GM10248 (cell line): ENCODE measurements at regions of chr10 and their contacts with region 1.

Region 1: GRCh38 chr10:100216006-100216405 is 13.4 kb downstream of the CHUK start:
- DNase-seq: no peak
- CTCF ChIP-seq: no peak

Region 2: DNA sequence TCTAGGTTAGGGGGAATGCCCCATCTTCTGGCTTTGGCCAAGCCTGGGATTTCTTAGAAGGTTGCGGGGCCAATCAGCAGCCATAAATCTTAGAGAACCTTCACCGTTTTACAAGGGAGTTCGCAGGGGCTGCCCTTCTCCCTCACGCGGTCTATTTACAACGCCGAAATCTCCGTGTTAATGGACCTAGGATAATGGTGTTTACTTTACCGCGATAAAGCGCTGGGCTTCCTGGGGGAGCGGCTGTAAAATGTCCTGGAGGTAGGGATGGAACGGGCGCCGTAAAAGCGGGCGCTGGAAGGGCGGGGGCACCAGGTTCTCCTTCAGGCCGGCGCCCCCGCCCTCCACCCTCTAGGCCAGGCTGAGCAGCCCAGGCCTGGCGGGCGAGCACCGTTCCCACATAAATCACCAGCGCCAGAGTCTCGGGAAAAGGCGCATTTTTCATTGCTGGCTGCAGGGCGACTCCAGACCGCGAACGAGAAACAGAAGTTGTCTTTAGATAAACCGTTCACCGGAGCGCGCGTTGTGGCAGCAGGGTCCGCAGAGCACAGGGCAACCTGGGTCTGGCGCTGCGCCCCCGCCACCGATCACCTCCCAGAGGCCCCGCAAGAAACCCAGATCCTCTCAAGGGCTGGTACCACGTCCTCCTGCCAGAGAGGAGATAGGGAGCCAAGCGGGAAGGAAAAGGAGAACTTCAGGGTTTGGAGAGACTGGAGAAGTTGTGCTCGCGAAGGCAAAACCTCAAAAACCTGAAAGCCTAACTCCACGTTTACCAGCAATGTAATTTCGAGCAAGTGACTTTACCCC is 695.8 kb before region 1 on chr10:
- CTCF ChIA-PET with region 1: no interaction called
- POLR2A ChIA-PET with region 1: no interaction called
- DNase-seq: no peak
- CTCF ChIP-seq: no peak

Region 3: GRCh38 chr10:100229819-100230422 is 13.9 kb after region 1 on chr10:
- CTCF ChIA-PET with region 1: interaction called, 10 read pairs
- POLR2A ChIA-PET with region 1: no interaction called
- DNase-seq: no peak
- CTCF ChIP-seq: no peak

Region 4: DNA sequence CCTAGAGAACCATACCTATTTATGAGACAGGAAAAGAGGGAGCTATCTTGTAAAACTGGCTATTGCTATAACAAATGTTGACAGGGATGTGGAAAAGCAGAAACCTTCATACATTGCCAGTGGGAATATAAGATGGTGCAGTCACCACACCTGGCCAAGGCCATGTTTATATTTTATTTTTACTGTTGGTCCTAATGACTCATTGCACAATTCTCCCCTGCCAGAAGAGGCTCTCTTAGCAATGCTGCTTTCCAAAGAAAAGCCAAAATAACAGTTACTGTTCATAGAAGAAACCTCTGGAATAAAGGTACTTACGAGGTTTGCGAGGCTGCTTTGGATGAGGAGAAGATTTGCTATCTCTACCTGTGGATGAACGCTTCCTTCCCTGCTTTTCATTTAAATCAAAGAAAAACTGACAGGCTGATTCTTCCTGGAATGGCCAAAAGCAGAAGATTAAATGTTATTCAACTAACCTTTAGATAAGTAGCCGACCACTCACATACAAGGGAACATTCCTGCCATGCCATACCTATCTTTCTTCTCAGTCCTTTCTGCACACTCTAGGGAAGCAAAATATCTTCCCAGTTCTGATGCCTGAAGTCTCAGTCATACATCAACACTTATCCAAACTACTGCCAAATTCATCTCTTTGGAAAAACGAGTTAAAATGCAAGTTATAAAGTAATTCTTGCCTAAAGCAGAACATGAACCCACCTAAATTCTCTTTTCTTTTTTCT is 29.6 kb after region 1 on chr10:
- CTCF ChIA-PET with region 1: no interaction called
- POLR2A ChIA-PET with region 1: no interaction called
- DNase-seq: no peak
- CTCF ChIP-seq: no peak